ENCODE measurements at regions of chr3 and their contacts with region 1.

Region 1: DNA sequence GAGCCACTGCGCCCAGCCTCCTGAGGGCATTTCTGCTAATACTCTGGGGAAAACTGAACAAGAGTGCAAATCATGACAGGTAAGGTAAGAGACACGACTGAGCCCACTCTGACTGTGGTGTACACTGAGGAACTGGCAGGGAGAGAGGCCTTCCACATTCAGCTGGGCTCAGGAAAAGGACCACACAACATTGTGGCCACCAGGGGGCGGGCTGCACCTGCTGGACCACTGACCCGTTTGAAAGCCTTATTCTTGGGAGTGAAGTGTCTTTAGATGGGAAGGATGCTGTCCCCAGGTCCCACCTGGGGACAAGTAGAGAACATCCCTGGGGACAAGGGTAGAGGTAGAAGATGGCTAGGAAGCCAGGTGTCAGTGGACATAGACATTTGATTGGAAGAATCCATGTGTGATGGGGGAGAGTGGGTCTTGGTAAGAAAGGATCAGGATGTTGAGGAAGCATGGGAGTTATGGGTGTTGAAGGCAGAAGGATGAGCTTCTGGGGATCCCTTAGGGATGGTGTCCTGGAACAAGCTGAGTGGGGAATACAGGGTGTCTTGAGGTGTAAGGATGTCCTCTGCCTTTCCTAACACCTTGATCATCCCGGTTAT is 6.2 kb upstream of the CTDSPL start:
- DNase-seq: peak; percentile 41
- ATAC-seq: peak; percentile 70
- H3K4me3 ChIP-seq: no peak overlapping the region
- H3K27ac ChIP-seq: no peak overlapping the region
- H3K4me1 ChIP-seq: peaks cover 3 to 8% of the 10 kb centered on the region in 2 experiments; a peak in 3 of 4 replicates
- H3K27me3 ChIP-seq: no peaks in the 10 kb centered on the region
- CTCF ChIP-seq: peak; percentile 82 to 94 (median 93)
- POLR2A ChIP-seq: no peak
- RAD21 ChIP-seq: peak; percentile 96

Region 2: GRCh38 chr3:37967260-37967881 is 111.9 kb after region 1 on chr3:
- CTCF ChIA-PET with region 1: interaction called, 72 read pairs
- POLR2A ChIA-PET with region 1: no interaction called
- RAD21 ChIA-PET with region 1: interaction called, 20 to 28 read pairs
- intact Hi-C with region 1: loop called (anchors 1 kb)
- DNase-seq: peak; percentile 28
- ATAC-seq: peak; percentile 97
- H3K4me3 ChIP-seq: no peak overlapping the region
- H3K27ac ChIP-seq: no peak overlapping the region
- H3K4me1 ChIP-seq: no peaks in the 10 kb centered on the region
- H3K27me3 ChIP-seq: no peaks in the 10 kb centered on the region
- CTCF ChIP-seq: peak; percentile 83 to 96 (median 88)
- POLR2A ChIP-seq: no peak
- RAD21 ChIP-seq: peak; percentile 86

Region 3: GRCh38 chr3:37996785-37997301 is 141.4 kb after region 1 on chr3:
- CTCF ChIA-PET with region 1: interaction called, 24 read pairs
- POLR2A ChIA-PET with region 1: no interaction called
- RAD21 ChIA-PET with region 1: interaction called in 1 of 2 experiments, 6 read pairs
- intact Hi-C with region 1: loop called (anchors 2 kb)
- DNase-seq: peak; percentile 79
- ATAC-seq: peak; percentile 66
- H3K4me3 ChIP-seq: no peak overlapping the region
- H3K27ac ChIP-seq: no peak overlapping the region
- H3K4me1 ChIP-seq: peaks cover 11 to 46% of the 10 kb centered on the region in 2 experiments
- H3K27me3 ChIP-seq: no peaks in the 10 kb centered on the region
- CTCF ChIP-seq: peak in 2 of 3 experiments; percentile 90 to 97; a peak in 4 of 6 replicates
- POLR2A ChIP-seq: no peak
- RAD21 ChIP-seq: no peak

Region 4: DNA sequence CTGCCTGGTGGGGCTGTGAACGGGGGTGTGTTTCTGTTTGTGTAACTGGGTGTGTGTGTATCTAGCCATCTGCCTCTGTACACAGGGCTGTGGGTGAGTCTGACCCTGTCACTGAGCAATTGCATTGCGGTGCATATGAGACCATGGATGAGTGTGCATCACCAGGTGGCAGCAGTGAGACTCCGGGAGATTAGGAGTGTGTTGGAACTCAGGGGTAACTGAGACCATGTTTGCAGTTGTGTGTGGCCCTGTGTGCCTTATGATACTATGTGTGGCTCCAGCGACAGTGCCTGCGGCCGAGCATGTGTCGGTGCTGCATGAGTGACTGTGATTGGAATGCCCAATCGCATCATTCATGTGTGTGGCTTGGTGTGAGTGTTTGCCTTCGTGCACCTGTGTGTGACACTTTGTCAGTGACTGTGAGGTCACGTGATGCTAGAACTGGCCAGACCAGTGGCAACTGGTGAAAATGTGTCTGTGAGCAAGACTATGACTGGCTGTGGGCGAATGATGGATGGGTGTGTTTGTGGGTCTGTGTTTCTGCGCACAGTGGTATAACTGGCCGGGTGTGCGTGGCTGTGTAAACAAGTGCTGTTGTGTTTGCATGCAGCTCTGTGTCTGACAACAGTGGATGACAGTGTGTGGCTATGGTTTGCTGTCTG is 149.1 kb after region 1 on chr3:
- CTCF ChIA-PET with region 1: interaction called, 5 read pairs
- POLR2A ChIA-PET with region 1: no interaction called
- RAD21 ChIA-PET with region 1: no interaction called
- intact Hi-C with region 1: loop called (anchors 2 kb)
- DNase-seq: peak; percentile 54
- ATAC-seq: peak; percentile 77
- H3K4me3 ChIP-seq: no peak overlapping the region
- H3K27ac ChIP-seq: no peak overlapping the region; the same call in 1 of the 2 replicates
- H3K4me1 ChIP-seq: peaks cover 0 to 24% of the 10 kb centered on the region in 2 experiments; a peak in 2 of 4 replicates
- H3K27me3 ChIP-seq: no peaks in the 10 kb centered on the region
- CTCF ChIP-seq: peak in 2 of 3 experiments; percentile 77 to 85; a peak in 4 of 6 replicates
- POLR2A ChIP-seq: no peak
- RAD21 ChIP-seq: no peak

Region 5: GRCh38 chr3:38651154-38651789 is 795.8 kb after region 1 on chr3:
- CTCF ChIA-PET with region 1: no interaction called
- POLR2A ChIA-PET with region 1: no interaction called
- RAD21 ChIA-PET with region 1: no interaction called
- intact Hi-C with region 1: loop called (anchors 10 kb)
- DNase-seq: peak; percentile 60
- ATAC-seq: peak; percentile 62
- H3K4me3 ChIP-seq: no peak overlapping the region
- H3K27ac ChIP-seq: no peak overlapping the region
- H3K4me1 ChIP-seq: peaks cover 11 to 31% of the 10 kb centered on the region in 2 experiments
- H3K27me3 ChIP-seq: no peaks in the 10 kb centered on the region
- CTCF ChIP-seq: peak; percentile 80 to 98 (median 85)
- POLR2A ChIP-seq: no peak
- RAD21 ChIP-seq: peak; percentile 80

Measured in HCT116 (cell line).